Heart left ventricle (tissue), 16 donors: ENCODE measurements at regions of chr19 and their contacts with region 1.

Region 1: GRCh38 chr19:46834121-46834520 is 16.5 kb downstream of the AP2S1 start:
- DNase-seq: no peak
- ATAC-seq: no peak
- H3K4me3 ChIP-seq: no peak overlapping the region
- H3K27ac ChIP-seq: no peak overlapping the region
- H3K4me1 ChIP-seq: peaks cover 0 to 7% (median 0%) of the 10 kb centered on the region in 12 donors
- H3K27me3 ChIP-seq: no peaks in the 10 kb centered on the region
- CTCF ChIP-seq: no peak
- POLR2A ChIP-seq: no peak

Region 2: GRCh38 chr19:46772170-46773017 is 61.7 kb before region 1 on chr19:
- intact Hi-C with region 1: loop called in 1 of 10 experiments (anchors 5 kb)
- DNase-seq: no peak
- ATAC-seq: no peak
- H3K4me3 ChIP-seq: no peak overlapping the region
- H3K27ac ChIP-seq: no peak overlapping the region
- H3K4me1 ChIP-seq: peaks cover 0 to 12% (median 0%) of the 10 kb centered on the region in 12 donors
- H3K27me3 ChIP-seq: no peaks in the 10 kb centered on the region
- CTCF ChIP-seq: no peak
- POLR2A ChIP-seq: no peak

Region 3: DNA sequence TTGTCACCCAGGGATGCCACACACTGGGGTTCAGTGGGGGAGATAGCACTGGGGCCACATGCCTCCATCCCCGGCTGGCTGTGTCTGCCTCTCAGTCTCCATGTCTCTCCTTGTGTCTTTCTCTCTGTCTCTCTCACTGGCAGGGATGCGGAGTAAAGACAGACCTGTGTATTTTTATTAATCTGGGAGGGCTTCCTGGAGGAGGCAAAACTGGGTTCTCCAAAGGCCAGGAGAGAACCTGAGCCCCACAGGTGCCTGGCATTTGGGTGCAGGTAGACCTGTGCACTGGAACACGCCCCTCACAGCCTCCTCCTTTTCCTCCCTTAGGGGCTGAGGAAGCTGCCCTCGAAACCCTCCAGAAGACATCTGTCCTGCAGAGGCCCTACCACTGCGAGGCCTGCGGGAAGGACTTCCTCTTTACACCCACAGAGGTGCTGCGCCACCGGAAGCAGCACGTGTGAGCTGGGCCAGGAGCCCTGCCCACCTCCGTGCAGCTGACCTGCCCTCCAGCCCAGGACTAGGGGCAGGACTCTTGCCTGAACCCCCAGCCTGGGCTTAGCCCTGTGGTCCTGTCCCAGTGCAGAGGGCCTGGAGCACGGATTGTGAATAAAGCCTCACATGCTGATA is 547.6 kb after region 1 on chr19:
- intact Hi-C with region 1: no loop called
- DNase-seq: peak in 1 of 5 donors; percentile 73
- ATAC-seq: no peak
- H3K4me3 ChIP-seq: no peak overlapping the region
- H3K27ac ChIP-seq: peak overlapping the region in 1 of 12 donors; percentile 42
- H3K4me1 ChIP-seq: peaks cover 0 to 27% (median 4%) of the 10 kb centered on the region in 12 donors
- H3K27me3 ChIP-seq: no peaks in the 10 kb centered on the region
- CTCF ChIP-seq: no peak
- POLR2A ChIP-seq: no peak